WTC11 (cell line): ENCODE measurements at regions of chr17 and their contacts with region 1.

Region 1: DNA sequence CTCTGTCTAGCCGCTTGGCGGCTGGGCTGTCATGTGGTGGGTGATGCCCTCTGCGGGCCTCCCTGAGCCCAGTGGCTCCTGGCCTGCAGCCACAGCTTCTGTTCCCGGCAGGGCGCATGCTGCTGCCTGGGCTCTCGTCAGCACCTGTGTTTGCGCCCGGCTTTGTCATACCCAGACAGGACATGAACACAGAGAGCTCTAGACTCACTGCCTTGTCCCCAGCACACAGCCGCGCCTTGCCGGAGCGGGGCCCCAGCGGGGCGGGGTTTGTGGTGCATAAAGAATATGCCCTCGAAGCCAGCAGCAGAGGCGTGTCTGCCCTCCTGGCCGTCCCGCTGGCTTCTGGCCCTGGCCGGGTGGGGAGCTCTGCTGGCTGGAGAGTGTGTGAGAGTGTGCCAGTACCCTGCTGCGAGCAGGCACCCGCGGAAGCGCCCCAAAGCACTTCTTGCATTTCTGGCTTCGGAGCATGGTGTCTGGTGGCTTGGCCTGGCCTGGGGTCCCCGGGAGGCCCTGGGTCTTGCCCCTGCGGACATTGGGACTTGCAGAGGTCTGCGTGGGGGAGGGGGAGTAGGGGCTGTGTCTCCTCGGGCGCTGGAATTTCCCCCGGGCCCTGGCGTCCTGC is 14.4 kb downstream of the ASPSCR1 start:
- DNase-seq: peak; percentile 52
- ATAC-seq: peak; percentile 57
- H3K4me3 Mint-ChIP-seq: no peak overlapping the region
- H3K27ac Mint-ChIP-seq: 0 out of 2 replicates have a peak overlapping the region, but pooled peaks have one; percentile 41
- H3K4me1 Mint-ChIP-seq: peaks cover 21% of the 10 kb centered on the region
- H3K27me3 Mint-ChIP-seq: no peaks in the 10 kb centered on the region
- CTCF ChIP-seq: no peak

Region 2: DNA sequence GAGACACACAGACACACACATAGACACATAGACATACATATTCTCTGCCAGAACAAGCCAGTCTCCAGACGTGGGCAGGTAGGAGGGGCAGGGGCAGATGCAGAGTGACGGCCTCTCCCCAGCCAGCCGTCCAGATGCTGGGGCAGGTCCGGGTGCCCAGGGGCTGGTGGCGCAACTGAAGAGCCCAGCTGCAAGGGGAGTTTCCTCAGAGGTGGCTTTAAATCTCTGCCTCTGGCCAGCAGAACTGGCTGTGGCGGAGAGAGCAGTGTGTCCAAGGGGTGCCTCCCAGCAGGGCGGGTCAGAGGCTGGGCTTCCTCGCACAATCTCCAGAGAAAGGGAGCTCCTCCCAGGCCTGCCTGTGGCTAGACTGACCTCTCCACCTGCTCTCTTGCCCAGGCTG is 197.3 kb before region 1 on chr17:
- CTCF ChIA-PET with region 1: no interaction called
- POLR2A ChIA-PET with region 1: no interaction called
- DNase-seq: no peak
- ATAC-seq: peak; percentile 57
- H3K4me3 Mint-ChIP-seq: no peak overlapping the region
- H3K27ac Mint-ChIP-seq: no peak overlapping the region
- H3K4me1 Mint-ChIP-seq: no peaks in the 10 kb centered on the region
- H3K27me3 Mint-ChIP-seq: peaks cover 5% of the 10 kb centered on the region
- CTCF ChIP-seq: no peak

Region 3: GRCh38 chr17:81808778-81809555 is 182.8 kb before region 1 on chr17:
- CTCF ChIA-PET with region 1: no interaction called
- POLR2A ChIA-PET with region 1: no interaction called
- DNase-seq: no peak
- ATAC-seq: no peak
- H3K4me3 Mint-ChIP-seq: no peak overlapping the region
- H3K27ac Mint-ChIP-seq: no peak overlapping the region
- H3K4me1 Mint-ChIP-seq: no peaks in the 10 kb centered on the region
- H3K27me3 Mint-ChIP-seq: peaks cover 25% of the 10 kb centered on the region
- CTCF ChIP-seq: no peak

Region 4: DNA sequence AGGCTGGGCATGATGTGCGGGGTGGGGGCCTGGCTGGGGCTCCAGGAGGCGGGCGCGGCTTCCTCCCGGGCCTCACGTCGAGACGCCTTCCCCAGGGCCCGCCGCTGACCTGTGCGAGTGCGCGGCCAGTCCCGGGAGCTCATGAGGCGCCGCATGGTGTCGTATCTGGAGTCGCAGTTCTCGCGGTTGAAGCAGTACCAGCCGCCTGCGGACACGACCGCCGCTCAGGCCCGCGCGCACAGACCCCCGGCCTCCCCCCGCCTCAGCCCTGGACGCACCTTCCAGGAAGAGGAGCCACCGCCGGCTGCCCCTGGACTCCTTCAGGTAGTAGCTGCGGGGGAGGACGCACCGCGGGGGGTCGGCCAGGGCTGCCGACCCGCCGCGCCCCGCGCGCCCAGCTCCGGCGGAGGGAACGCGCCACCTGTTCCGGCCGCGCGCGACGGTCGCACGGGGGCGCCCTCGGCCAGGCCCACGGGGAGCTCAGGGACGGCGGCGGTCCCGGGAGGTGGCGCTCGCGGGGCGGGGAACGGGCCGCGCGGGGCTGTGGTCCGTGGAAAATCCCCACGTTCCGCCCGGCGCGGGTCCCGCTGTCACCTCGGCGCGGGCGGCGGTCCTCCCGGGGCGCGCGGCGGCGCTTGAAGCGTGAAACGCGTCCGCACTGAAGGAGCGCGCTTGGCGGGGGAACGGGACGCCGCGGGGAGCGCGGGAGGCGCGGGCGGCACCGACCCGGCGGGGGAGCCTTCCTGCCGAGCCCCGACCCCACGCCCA is 32.2 kb before region 1 on chr17:
- CTCF ChIA-PET with region 1: interaction called, 19 read pairs
- POLR2A ChIA-PET with region 1: no interaction called
- DNase-seq: peak; percentile 70
- ATAC-seq: peak; percentile 29
- H3K4me3 Mint-ChIP-seq: peak overlapping the region; percentile 51
- H3K27ac Mint-ChIP-seq: no peak overlapping the region
- H3K4me1 Mint-ChIP-seq: 0 out of 2 replicates have a peak, but pooled peaks cover 4% of the 10 kb centered on the region
- H3K27me3 Mint-ChIP-seq: peaks cover 67% of the 10 kb centered on the region
- CTCF ChIP-seq: 0 out of 2 replicates have a peak, but pooled peaks have one; percentile 17

Region 5: DNA sequence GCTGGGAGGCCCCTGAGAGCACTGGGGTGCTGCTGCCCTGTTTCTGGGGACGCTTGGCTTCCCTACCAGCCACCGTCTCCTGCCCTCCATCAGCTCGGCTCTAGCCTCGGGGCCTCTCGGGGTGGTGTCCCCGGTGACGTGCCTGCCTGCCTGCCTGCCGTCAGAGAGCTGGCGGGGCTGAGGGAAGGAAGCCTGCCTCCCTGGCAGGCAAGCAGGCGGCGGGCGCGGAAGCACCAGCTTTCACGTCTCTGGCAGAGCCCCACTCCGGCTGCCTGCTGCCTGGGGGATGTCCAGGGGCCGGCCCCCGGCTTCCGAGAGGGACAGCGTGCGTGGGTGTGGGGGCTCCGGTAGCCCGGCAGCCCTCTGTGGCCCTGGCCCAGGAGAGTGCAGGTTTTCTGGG is 21.5 kb after region 1 on chr17:
- CTCF ChIA-PET with region 1: interaction called, 11 read pairs
- POLR2A ChIA-PET with region 1: no interaction called
- DNase-seq: no peak
- ATAC-seq: no peak
- H3K4me3 Mint-ChIP-seq: no peak overlapping the region
- H3K27ac Mint-ChIP-seq: no peak overlapping the region
- H3K4me1 Mint-ChIP-seq: no peaks in the 10 kb centered on the region
- H3K27me3 Mint-ChIP-seq: no peaks in the 10 kb centered on the region
- CTCF ChIP-seq: no peak